Activated naive CD4-positive, alpha-beta T cell treated with anti-CD3 and anti-CD28 coated beads for 36 hours (primary cell): ENCODE measurements at regions of chr7 and their contacts with region 1.

Region 1: GRCh38 chr7:114916261-114916892 is 5.5 kb upstream of the MDFIC start:
- DNase-seq: peak; percentile 81
- H3K4me3 Mint-ChIP-seq: peak overlapping the region; percentile 46
- H3K27ac Mint-ChIP-seq: peak overlapping the region; percentile 94
- H3K4me1 Mint-ChIP-seq: peaks cover 66% of the 10 kb centered on the region
- H3K27me3 Mint-ChIP-seq: no peaks in the 10 kb centered on the region

Region 2: GRCh38 chr7:114825423-114825951 is 90.9 kb before region 1 on chr7:
- CTCF ChIA-PET with region 1: no interaction called
- intact Hi-C with region 1: loop called (anchors 1 kb)
- DNase-seq: peak; percentile 82
- H3K4me3 Mint-ChIP-seq: peak overlapping the region; percentile 32
- H3K27ac Mint-ChIP-seq: peak overlapping the region; percentile 90
- H3K4me1 Mint-ChIP-seq: peaks cover 33% of the 10 kb centered on the region
- H3K27me3 Mint-ChIP-seq: peaks cover 4% of the 10 kb centered on the region

Region 3: DNA sequence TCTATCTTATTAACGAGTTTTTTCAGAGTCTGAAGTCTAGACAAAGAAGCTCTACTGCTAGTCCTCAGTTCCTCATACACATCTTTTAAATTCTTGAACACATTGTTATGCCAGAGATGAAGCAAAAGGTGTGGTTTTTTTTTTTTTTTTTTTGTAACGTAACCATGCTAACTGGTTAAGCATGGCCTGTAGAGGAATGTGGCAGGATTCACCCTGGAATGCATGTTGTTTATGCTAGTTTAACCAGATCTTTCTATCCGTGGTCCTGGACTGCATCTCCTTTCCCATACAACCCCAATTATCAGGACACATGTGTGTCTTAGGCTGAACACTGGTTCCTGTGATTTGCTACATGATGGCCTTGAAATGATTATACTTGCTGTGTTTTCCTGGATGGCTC is 73.8 kb before region 1 on chr7:
- CTCF ChIA-PET with region 1: no interaction called
- intact Hi-C with region 1: no loop called
- DNase-seq: no peak
- H3K4me3 Mint-ChIP-seq: no peak overlapping the region
- H3K27ac Mint-ChIP-seq: no peak overlapping the region
- H3K4me1 Mint-ChIP-seq: peaks cover 8% of the 10 kb centered on the region
- H3K27me3 Mint-ChIP-seq: peaks cover 18% of the 10 kb centered on the region

Region 4: DNA sequence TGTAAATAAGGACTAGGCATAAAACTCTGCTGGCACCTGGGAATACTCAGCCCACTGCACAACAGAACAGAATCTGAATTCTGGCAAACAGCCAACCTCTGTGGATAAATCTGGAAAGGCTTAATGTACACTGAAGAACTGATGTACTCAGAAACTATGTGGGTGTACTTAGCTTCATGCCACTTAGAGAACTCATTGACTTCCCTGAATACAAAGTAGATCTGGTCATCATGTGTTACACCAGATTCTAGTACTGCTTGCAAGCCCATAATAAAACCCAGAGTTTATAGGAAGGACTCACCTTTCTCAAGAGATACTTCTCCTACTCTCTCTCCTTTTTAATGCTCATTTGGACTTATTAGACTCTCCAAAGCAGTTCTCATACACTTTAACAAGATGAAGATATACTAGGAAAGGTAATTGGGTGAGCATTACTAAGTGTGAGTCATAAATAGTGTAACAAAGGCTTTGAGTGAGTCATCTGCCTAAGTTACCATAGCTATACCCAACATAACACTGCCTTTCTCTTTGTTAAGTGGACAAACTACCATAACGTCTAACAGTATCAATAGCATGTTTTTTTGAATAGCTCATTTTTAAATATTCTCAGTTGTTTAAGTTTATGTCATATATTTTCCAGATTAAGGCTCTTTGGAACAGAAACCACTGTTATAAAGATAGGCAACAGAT is 314.6 kb after region 1 on chr7:
- CTCF ChIA-PET with region 1: no interaction called
- intact Hi-C with region 1: loop called (anchors 1 kb)
- DNase-seq: no peak
- H3K4me3 Mint-ChIP-seq: no peak overlapping the region
- H3K27ac Mint-ChIP-seq: peak overlapping the region; percentile 19
- H3K4me1 Mint-ChIP-seq: peaks cover 18% of the 10 kb centered on the region
- H3K27me3 Mint-ChIP-seq: peaks cover 6% of the 10 kb centered on the region